ENCODE measurements at regions of chr22 and their contacts with region 1.

Region 1: GRCh38 chr22:49992921-49993648 is 19.5 kb downstream of the IL17REL start:
- DNase-seq: peak; percentile 75 to 97 (median 91)

Region 2: GRCh38 chr22:49936018-49936952 is 56.8 kb before region 1 on chr22:
- intact Hi-C with region 1: loop called (anchors 10 kb)
- DNase-seq: peak in 41 of 42 donors; percentile 40 to 90 (median 70)

Measured in head of caudate nucleus (tissue), 42 donors.